CD8-positive, alpha-beta memory T cell (primary cell): ENCODE measurements at regions of chr10 and their contacts with region 1.

Region 1: DNA sequence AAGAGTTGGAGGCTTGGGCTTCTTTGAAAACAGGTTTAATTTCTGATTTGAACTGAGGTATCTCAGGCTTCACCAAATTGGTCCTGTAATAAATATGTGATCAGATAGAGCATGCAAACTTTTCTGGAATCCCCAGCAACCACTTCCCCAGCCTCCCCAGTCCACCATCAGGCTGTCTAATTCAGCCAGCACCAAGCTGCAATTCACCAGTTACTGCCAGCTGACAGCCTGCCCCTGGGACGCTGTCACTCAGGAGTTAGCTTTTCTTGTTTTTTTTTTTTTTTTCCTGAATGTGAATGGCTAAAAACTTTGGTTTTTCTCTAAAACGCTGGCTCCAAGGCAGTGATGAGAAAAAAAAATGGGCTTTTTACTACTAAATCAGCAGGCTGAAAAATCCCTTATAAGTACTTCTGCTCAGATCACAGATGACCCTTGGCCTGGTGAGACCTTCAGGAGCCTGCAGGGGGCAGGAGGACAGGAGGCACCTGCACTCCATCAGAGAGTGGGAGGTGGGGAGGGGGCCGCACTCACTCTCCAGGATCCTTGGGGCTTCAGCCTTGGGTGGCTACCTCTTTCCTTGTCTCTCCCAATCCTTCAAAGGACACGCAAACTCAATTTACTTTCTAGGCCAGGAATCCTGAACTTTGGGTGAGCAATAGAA is 349.4 kb downstream of the GATA3 start:
- DNase-seq: no peak
- H3K4me3 ChIP-seq: peak overlapping the region; percentile 40
- H3K4me3 Mint-ChIP-seq: peak overlapping the region; percentile 68 to 83 (median 75)
- H3K27ac ChIP-seq: peak overlapping the region; percentile 72
- H3K27ac Mint-ChIP-seq: peak overlapping the region; percentile 93 to 99 (median 97)
- H3K4me1 ChIP-seq: peaks cover 68% of the 10 kb centered on the region
- H3K4me1 Mint-ChIP-seq: peaks cover 78 to 91% (median 88%) of the 10 kb centered on the region in 3 donors
- H3K27me3 ChIP-seq: no peaks in the 10 kb centered on the region
- H3K27me3 Mint-ChIP-seq: peaks cover 0 to 1% of the 10 kb centered on the region in 2 donors

Region 2: GRCh38 chr10:8312781-8313180 is 91.1 kb before region 1 on chr10:
- CTCF ChIA-PET with region 1: no interaction called
- POLR2A ChIA-PET with region 1: no interaction called
- DNase-seq: no peak
- H3K4me3 ChIP-seq: no peak overlapping the region
- H3K4me3 Mint-ChIP-seq: no peak overlapping the region
- H3K27ac ChIP-seq: no peak overlapping the region
- H3K27ac Mint-ChIP-seq: no peak overlapping the region
- H3K4me1 ChIP-seq: no peaks in the 10 kb centered on the region
- H3K4me1 Mint-ChIP-seq: peaks cover 0 to 8% (median 0%) of the 10 kb centered on the region in 3 donors
- H3K27me3 ChIP-seq: no peaks in the 10 kb centered on the region
- H3K27me3 Mint-ChIP-seq: no peaks in the 10 kb centered on the region

Region 3: GRCh38 chr10:8349691-8350217 is 54.1 kb before region 1 on chr10:
- CTCF ChIA-PET with region 1: no interaction called
- POLR2A ChIA-PET with region 1: interaction called, 17 read pairs
- DNase-seq: no peak
- H3K4me3 ChIP-seq: no peak overlapping the region
- H3K4me3 Mint-ChIP-seq: peak overlapping the region in 1 of 7 donors; percentile 10
- H3K27ac ChIP-seq: no peak overlapping the region
- H3K27ac Mint-ChIP-seq: peak overlapping the region in 2 of 8 donors; percentile 43 to 80
- H3K4me1 ChIP-seq: no peaks in the 10 kb centered on the region
- H3K4me1 Mint-ChIP-seq: no peaks in the 10 kb centered on the region
- H3K27me3 ChIP-seq: no peaks in the 10 kb centered on the region
- H3K27me3 Mint-ChIP-seq: peaks cover 0 to 1% of the 10 kb centered on the region in 2 donors